Heart right ventricle (tissue), 16 donors: ENCODE measurements at regions of chr1 and their contacts with region 1.

Region 1: DNA sequence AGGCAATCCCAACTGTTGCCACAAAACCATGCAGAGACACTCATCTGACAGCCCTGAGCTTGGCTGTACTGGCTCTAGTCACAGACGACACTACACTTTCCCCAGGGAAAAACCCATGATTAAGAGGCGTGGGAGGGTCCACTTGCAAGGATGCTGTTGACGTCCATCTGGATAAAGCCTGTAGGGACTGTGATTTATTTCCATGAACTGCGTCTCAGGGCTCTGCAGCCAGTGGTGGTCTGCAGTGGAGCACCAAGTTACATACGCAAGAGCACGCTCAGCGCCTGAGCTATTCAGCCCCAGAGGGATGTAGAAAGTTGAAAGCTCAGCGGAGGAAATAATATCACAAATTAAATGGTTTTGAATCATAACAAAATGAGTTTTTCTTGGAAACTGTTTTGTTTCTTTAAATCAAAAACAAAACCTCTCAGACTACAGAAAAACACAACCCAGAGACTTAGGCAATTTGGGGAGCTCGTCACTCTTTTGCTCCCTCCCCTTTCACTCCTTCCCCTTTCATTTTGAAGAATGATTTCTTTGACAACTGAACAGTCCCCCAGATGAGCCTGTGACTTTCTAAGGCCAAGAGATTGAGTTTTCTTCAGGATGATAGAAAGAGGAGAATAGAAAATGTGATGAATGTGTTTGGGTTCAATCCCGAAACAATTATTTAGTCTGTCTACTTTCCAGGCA is 71.2 kb downstream of the NGF start:
- DNase-seq: peak; percentile 42 to 74
- ATAC-seq: peak; percentile 78 to 94 (median 90)
- H3K4me3 ChIP-seq: peak overlapping the region in 2 of 10 donors; percentile 4 to 6
- H3K27ac ChIP-seq: peak overlapping the region in 9 of 10 donors; percentile 42 to 77 (median 63)
- H3K4me1 ChIP-seq: peaks cover 0 to 19% (median 0%) of the 10 kb centered on the region in 9 donors
- H3K27me3 ChIP-seq: no peaks in the 10 kb centered on the region
- CTCF ChIP-seq: no peak

Region 2: GRCh38 chr1:115219937-115220336 is 46.9 kb before region 1 on chr1:
- intact Hi-C with region 1: loop called in 2 of 10 experiments (anchors 2 to 5 kb)
- DNase-seq: peak; percentile 11 to 37
- ATAC-seq: peak; percentile 53 to 88 (median 68)
- H3K4me3 ChIP-seq: no peak overlapping the region
- H3K27ac ChIP-seq: peak overlapping the region in 9 of 10 donors; percentile 13 to 78 (median 57)
- H3K4me1 ChIP-seq: peaks cover 3 to 35% (median 14%) of the 10 kb centered on the region in 9 donors
- H3K27me3 ChIP-seq: no peaks in the 10 kb centered on the region
- CTCF ChIP-seq: no peak

Region 3: GRCh38 chr1:115323376-115324004 is 56.6 kb after region 1 on chr1:
- intact Hi-C with region 1: loop called in 1 of 10 experiments (anchors 10 kb)
- DNase-seq: no peak
- ATAC-seq: no peak
- H3K4me3 ChIP-seq: no peak overlapping the region
- H3K27ac ChIP-seq: peak overlapping the region in 1 of 10 donors; percentile 24
- H3K4me1 ChIP-seq: peaks cover 0 to 36% (median 0%) of the 10 kb centered on the region in 9 donors
- H3K27me3 ChIP-seq: no peaks in the 10 kb centered on the region
- CTCF ChIP-seq: no peak